Endothelial cell of umbilical vein (primary cell): ENCODE measurements at regions of chr6 and their contacts with region 1.

Region 1: GRCh38 chr6:11653028-11653583 is 115.6 kb downstream of the TMEM170B start:
- DNase-seq: peak; percentile 97
- H3K4me3 ChIP-seq: no peak overlapping the region
- H3K27ac ChIP-seq: peak overlapping the region; percentile 99
- H3K4me1 ChIP-seq: peaks cover 66% of the 10 kb centered on the region
- H3K27me3 ChIP-seq: no peaks in the 10 kb centered on the region
- CTCF ChIP-seq: no peak
- POLR2A ChIP-seq: peak; percentile 71

Region 2: DNA sequence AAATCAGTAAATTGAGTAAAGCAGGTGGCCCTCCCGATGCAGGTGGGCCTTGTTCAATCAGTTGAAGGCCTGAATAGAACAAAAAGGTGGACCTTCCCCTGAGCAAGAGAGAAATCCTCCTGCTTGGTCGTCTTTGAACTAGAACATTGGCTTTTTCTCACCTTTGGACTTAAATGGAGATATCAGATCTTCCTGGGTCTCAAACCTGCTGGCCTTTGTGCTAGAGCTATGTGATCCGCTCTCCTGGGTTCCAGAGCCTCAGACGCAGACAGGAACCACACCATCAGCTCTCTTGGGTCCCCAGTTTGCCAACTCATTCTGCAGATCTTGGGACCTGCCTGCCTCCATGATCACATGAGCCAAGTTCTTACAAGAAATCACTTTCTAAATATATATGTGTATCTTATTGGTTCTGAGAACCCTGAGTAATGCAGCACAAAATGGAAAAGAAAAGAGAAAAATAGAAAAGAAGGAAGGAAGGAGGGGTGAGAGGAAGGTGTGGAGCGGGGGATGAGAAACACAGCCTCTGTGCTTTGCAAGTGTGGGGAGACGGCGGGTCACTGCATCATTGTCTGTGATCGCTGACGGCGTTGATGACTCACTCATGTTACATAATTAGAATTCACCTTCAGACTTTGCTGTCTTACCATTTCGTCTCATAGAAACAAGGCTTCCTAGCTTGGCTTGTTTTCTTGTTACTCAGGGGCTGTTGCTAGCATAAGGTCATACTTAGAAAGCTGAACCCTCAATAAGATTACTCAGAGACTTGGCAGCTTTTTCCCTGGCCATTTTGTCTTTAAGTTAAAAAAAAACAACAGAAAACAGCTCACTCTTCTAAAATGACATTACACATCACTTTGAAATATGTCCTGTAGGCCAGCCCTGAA is 335.0 kb before region 1 on chr6:
- CTCF ChIA-PET with region 1: no interaction called
- POLR2A ChIA-PET with region 1: no interaction called
- dilution Hi-C with region 1: no loop called
- intact Hi-C with region 1: loop called (anchors 1 kb)
- DNase-seq: peak; percentile 99
- H3K4me3 ChIP-seq: no peak overlapping the region
- H3K27ac ChIP-seq: peak overlapping the region; percentile 100
- H3K4me1 ChIP-seq: peaks cover 37% of the 10 kb centered on the region
- H3K27me3 ChIP-seq: no peaks in the 10 kb centered on the region
- CTCF ChIP-seq: no peak
- POLR2A ChIP-seq: no peak

Region 3: GRCh38 chr6:11700118-11700718 is 47.1 kb after region 1 on chr6:
- CTCF ChIA-PET with region 1: interaction called, 5 read pairs
- POLR2A ChIA-PET with region 1: no interaction called
- dilution Hi-C with region 1: no loop called
- intact Hi-C with region 1: loop called (anchors 2 kb)
- DNase-seq: peak; percentile 47
- H3K4me3 ChIP-seq: no peak overlapping the region
- H3K27ac ChIP-seq: no peak overlapping the region
- H3K4me1 ChIP-seq: no peaks in the 10 kb centered on the region
- H3K27me3 ChIP-seq: no peaks in the 10 kb centered on the region
- CTCF ChIP-seq: peak in 1 of 2 donors; percentile 16
- POLR2A ChIP-seq: no peak

Region 4: DNA sequence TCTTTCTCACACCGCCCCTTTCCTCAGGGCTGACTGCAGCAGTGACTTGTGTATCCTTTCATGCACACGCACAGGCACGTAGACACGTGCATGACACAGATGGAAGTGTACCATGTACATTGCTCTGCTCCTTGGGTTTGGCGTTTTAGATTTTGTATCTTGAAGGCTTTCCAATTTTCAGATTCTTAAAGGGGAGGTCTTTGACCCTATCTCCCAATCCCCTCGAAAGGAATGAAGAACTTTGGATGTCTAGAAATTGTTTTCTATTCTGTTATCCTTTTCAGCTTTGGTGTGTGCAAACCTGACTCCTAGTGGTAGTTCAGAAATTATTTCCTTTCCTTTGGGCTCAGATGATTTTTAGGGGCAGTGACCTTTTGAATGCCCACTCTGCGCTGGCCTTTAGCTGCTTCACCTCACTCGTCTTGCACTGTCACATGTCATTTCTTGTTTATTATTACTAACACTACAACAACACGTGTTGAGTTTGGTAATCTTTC is 422.0 kb after region 1 on chr6:
- CTCF ChIA-PET with region 1: interaction called, 9 read pairs
- POLR2A ChIA-PET with region 1: no interaction called
- dilution Hi-C with region 1: no loop called
- intact Hi-C with region 1: loop called (anchors 1 kb)
- DNase-seq: peak; percentile 34
- H3K4me3 ChIP-seq: no peak overlapping the region
- H3K27ac ChIP-seq: no peak overlapping the region
- H3K4me1 ChIP-seq: peaks cover 22% of the 10 kb centered on the region
- H3K27me3 ChIP-seq: no peaks in the 10 kb centered on the region
- CTCF ChIP-seq: peak; percentile 13 to 18
- POLR2A ChIP-seq: no peak

Region 5: DNA sequence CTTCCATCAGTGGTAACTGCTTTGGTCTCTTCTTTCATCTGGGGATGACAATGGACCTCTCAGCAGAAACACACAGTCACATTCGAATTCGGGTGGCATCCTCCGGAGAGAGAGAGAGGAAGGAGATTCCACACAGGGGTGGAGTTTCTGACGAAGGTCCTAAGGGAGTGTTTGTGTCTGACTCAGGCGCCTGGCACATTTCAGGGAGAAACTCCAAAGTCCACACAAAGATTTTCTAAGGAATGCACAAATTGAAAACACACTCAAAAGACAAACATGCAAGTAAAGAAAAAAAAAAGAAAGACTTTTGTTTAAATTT is 643.1 kb after region 1 on chr6:
- CTCF ChIA-PET with region 1: interaction called, 89 read pairs
- POLR2A ChIA-PET with region 1: interaction called, 125 read pairs
- dilution Hi-C with region 1: no loop called
- intact Hi-C with region 1: no loop called
- DNase-seq: peak; percentile 53
- H3K4me3 ChIP-seq: peak overlapping the region in 2 of 3 experiments; percentile 91 to 96
- H3K27ac ChIP-seq: peak overlapping the region; percentile 98
- H3K4me1 ChIP-seq: peaks cover 30% of the 10 kb centered on the region
- H3K27me3 ChIP-seq: no peaks in the 10 kb centered on the region
- CTCF ChIP-seq: no peak
- POLR2A ChIP-seq: no peak

Region 6: DNA sequence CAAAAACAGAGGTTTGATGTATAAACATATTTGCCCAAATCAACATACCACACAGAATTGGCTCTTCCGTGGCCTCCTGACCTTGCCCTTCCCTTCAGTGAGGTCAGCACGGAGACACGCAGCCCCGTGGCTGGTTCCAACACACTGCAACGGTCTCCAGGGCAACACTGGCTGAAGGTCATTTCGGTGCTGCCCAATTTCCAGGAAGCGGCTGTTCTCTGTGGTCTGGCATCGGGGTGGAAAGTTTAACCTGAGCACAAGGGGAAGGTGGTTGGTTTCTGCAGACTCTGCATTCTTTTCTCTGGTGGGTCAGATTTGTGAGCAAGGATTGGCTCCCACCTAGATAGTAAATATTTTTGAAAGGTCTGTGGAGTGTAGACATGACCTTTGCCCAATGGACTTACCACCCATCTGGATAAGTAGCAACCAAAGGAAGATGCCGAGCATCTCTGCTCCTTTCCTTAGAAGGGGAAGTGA is 885.8 kb after region 1 on chr6:
- CTCF ChIA-PET with region 1: no interaction called
- POLR2A ChIA-PET with region 1: interaction called, 4 read pairs
- dilution Hi-C with region 1: no loop called
- intact Hi-C with region 1: loop called (anchors 1 kb)
- DNase-seq: peak; percentile 89
- H3K4me3 ChIP-seq: no peak overlapping the region
- H3K27ac ChIP-seq: peak overlapping the region; percentile 87
- H3K4me1 ChIP-seq: peaks cover 51% of the 10 kb centered on the region
- H3K27me3 ChIP-seq: no peaks in the 10 kb centered on the region
- CTCF ChIP-seq: no peak
- POLR2A ChIP-seq: peak; percentile 38

Region 7: GRCh38 chr6:12890171-12890790 is 1237.2 kb after region 1 on chr6:
- CTCF ChIA-PET with region 1: interaction called, 5 read pairs
- POLR2A ChIA-PET with region 1: no interaction called
- dilution Hi-C with region 1: no loop called
- intact Hi-C with region 1: loop called (anchors 1 kb)
- DNase-seq: peak; percentile 3
- H3K4me3 ChIP-seq: no peak overlapping the region
- H3K27ac ChIP-seq: no peak overlapping the region
- H3K4me1 ChIP-seq: no peaks in the 10 kb centered on the region
- H3K27me3 ChIP-seq: peaks cover 0 to 10% of the 10 kb centered on the region in 2 experiments
- CTCF ChIP-seq: peak; percentile 66 to 70
- POLR2A ChIP-seq: no peak